CD4-positive, alpha-beta T cell (primary cell): ENCODE measurements at regions of chr13 and their contacts with region 1.

Region 1: GRCh38 chr13:29902101-29902952 is 51.9 kb upstream of the UBL3 start:
- DNase-seq: peak in 11 of 14 experiments; percentile 3 to 74 (median 17)
- ATAC-seq: peak; percentile 69
- H3K4me3 ChIP-seq: peak overlapping the region; percentile 45
- H3K4me3 Mint-ChIP-seq: peak overlapping the region; percentile 84
- H3K27ac ChIP-seq: peak overlapping the region in 1 of 2 donors; percentile 37
- H3K27ac Mint-ChIP-seq: peak overlapping the region; percentile 60
- H3K4me1 ChIP-seq: peaks cover 20% of the 10 kb centered on the region
- H3K4me1 Mint-ChIP-seq: peaks cover 27% of the 10 kb centered on the region
- H3K27me3 ChIP-seq: no peaks in the 10 kb centered on the region
- H3K27me3 Mint-ChIP-seq: no peaks in the 10 kb centered on the region
- CTCF ChIP-seq: no peak

Region 2: DNA sequence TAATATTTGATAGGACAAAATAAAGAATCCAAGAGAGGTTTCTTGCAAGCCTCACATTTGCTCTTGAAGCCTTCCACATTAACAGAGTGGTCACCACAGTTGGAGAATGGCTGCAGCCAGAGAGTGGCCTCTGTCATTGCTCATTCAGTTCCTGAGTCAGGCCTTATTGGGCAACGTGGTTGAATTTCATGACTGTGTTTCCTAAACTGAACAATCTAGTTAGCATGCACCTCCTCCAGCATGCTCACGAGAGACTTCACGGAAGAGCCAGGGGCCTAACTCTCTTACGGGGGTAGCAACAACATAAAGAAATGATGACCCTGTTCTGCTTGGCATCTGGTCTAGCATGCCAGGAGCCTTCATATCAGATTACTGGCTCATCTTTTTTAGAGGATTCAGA is 42.4 kb before region 1 on chr13:
- CTCF ChIA-PET with region 1: no interaction called
- POLR2A ChIA-PET with region 1: no interaction called
- intact Hi-C with region 1: loop called in 1 of 2 experiments (anchors 5 kb)
- DNase-seq: peak in 2 of 14 experiments; percentile 19 to 31
- ATAC-seq: no peak
- H3K4me3 ChIP-seq: no peak overlapping the region
- H3K4me3 Mint-ChIP-seq: no peak overlapping the region
- H3K27ac ChIP-seq: no peak overlapping the region
- H3K27ac Mint-ChIP-seq: no peak overlapping the region
- H3K4me1 ChIP-seq: no peaks in the 10 kb centered on the region
- H3K4me1 Mint-ChIP-seq: no peaks in the 10 kb centered on the region
- H3K27me3 ChIP-seq: no peaks in the 10 kb centered on the region
- H3K27me3 Mint-ChIP-seq: peaks cover 5% of the 10 kb centered on the region
- CTCF ChIP-seq: no peak